Mammary epithelial cell (primary cell): ENCODE measurements at regions of chr3 and their contacts with region 1.

Region 1: DNA sequence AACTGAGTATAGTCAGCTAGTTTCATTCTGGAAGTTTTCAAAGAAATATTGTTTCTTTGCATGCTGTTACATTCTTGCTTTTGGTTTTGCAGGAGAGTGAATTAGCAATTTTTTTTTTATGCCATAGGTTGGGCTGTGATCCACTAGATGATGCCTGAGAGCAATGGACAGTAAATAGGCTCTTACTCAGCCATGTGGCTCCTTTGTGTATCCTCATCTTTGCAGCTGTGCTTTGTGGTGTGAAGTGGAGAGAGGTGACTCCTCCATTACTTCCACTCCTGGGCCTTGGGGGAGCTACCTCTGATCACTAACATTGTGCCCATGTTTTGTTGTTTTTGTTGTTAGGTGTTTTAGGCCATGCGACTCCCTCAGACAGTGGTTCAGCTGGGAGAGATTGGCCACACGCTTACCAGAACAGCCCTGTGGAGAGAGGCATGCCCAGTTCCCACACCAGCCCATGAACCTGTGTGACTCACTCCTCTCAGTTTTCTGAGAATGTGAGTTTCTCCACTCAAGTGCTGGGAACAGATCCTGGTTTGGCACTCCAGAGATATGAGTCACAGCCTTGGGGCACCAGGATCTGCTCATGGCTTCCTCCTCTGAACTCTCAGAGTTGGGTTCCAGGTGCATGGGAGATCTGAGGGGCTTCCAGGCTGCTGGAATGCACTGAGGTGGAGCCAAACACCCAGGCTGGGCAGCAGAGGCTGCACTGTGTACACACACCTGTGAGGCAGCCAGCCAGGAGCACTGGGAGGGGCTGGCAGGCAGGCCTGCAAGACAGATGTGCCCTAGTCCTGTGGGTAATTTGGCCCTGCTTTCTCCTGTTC is 785.3 kb downstream of the ROBO2 start:
- DNase-seq: peak; percentile 99
- H3K4me3 ChIP-seq: no peak overlapping the region
- H3K27ac ChIP-seq: peak overlapping the region; percentile 77
- H3K4me1 ChIP-seq: peaks cover 16% of the 10 kb centered on the region
- H3K27me3 ChIP-seq: no peaks in the 10 kb centered on the region
- CTCF ChIP-seq: peak in 1 of 2 donors; percentile 24

Region 2: GRCh38 chr3:77898621-77899020 is 73.4 kb after region 1 on chr3:
- CTCF ChIA-PET with region 1: no interaction called
- dilution Hi-C with region 1: no loop called
- in situ Hi-C with region 1: no loop called
- intact Hi-C with region 1: no loop called
- DNase-seq: peak; percentile 10
- H3K4me3 ChIP-seq: no peak overlapping the region
- H3K27ac ChIP-seq: no peak overlapping the region
- H3K4me1 ChIP-seq: peaks cover 3% of the 10 kb centered on the region
- H3K27me3 ChIP-seq: no peaks in the 10 kb centered on the region
- CTCF ChIP-seq: no peak

Region 3: GRCh38 chr3:78140866-78141658 is 315.8 kb after region 1 on chr3:
- CTCF ChIA-PET with region 1: no interaction called
- dilution Hi-C with region 1: no loop called
- in situ Hi-C with region 1: no loop called
- intact Hi-C with region 1: loop called (anchors 5 kb)
- DNase-seq: peak; percentile 77
- H3K4me3 ChIP-seq: no peak overlapping the region
- H3K27ac ChIP-seq: peak overlapping the region; percentile 75
- H3K4me1 ChIP-seq: peaks cover 30% of the 10 kb centered on the region
- H3K27me3 ChIP-seq: no peaks in the 10 kb centered on the region
- CTCF ChIP-seq: no peak